Ascending aorta (tissue), 2 donors: ENCODE measurements at regions of chr2 and their contacts with region 1.

Region 1: DNA sequence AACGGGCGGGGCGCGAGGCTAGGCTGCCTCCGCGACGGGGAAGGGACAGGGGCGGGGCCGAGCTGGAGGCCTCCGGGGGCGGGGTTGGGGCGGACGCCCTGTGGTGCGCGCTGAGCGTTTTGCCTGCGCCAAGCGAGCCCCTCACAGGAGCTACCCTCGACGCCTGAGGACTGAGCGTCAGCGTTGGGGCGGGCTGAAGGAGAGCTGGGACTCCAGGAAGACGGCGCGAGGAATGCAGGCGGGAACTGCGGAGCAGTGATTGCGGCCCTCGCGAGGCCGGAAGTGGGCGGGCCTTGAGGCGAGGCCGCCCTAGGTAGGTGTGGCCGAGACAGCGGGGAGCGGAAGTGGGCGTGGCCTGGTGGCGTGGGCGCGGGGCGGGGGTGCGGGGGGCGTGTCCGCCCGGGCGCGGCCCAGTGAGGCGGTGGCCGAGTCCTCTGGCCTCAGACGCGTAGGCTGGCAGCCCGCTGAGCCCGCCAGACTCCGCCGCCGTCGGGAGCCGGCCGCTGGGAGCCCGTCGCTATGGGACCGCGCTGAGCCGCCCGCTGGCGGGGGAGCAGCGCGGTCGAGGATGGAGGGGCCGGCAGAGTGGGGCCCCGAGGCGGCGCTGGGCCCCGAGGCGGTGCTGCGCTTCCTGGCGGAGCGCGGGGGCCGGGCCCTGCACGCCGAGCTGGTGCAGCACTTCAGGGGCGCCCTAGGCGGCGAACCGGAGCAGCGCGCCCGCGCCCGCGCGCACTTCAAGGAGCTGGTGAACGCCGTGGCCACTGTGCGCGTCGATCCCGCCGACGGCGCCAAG is at the starts of genes SEPTIN10 and SOWAHC:
- DNase-seq: peak; percentile 92 to 99
- H3K4me3 ChIP-seq: peak within 1 kb of the TSS; percentile 72 to 93
- H3K27ac ChIP-seq: peak within 1 kb of the TSS; percentile 93 to 99
- H3K4me1 ChIP-seq: peaks cover 9 to 25% of the 10 kb centered on the region in 2 donors
- H3K27me3 ChIP-seq: no peaks in the 10 kb centered on the region
- CTCF ChIP-seq: no peak
- total RNA-seq, gene SEPTIN10: 59.0 TPM
- total RNA-seq, gene SOWAHC: 20.8 TPM

Region 2: GRCh38 chr2:109164739-109165221 is 449.3 kb before region 1 on chr2:
- intact Hi-C with region 1: loop called (anchors 10 kb)
- DNase-seq: peak in 1 of 2 donors; percentile 81
- H3K4me3 ChIP-seq: no peak overlapping the region
- H3K27ac ChIP-seq: peak overlapping the region; percentile 58 to 66
- H3K4me1 ChIP-seq: peaks cover 17 to 46% of the 10 kb centered on the region in 2 donors
- H3K27me3 ChIP-seq: no peaks in the 10 kb centered on the region
- CTCF ChIP-seq: no peak

Region 3: DNA sequence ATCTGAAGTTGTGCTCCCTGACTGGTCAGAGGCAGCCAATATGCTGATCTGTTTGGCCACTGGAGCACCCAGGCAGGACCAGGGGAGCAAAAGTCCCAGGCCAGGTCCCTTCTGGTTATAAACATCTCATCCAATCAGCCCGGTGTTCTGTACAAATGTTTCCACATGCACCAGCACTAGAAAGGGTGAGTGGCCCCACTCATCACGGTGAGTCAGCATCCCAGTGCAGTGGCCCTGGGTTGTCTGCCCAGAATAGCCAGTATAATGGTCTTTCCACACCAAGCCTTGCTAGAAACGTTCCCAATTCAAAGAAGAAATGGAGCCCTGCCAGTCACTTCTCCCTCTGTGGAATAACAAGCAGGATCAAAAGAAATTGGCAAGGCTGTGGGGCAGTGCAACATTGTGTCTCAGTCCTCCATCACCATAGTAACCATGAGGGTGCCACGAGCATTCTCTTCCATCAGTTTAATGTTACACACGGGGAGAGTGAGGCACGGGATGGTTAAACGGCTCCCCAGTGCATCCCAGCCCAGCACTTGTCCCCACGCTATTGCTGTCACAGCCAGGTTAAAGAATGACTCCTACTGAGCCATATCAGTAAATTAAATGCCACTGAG is 175.2 kb before region 1 on chr2:
- intact Hi-C with region 1: no loop called
- DNase-seq: peak; percentile 75 to 93
- H3K4me3 ChIP-seq: no peak overlapping the region
- H3K27ac ChIP-seq: peak overlapping the region; percentile 89 to 96
- H3K4me1 ChIP-seq: peaks cover 36 to 49% of the 10 kb centered on the region in 2 donors
- H3K27me3 ChIP-seq: no peaks in the 10 kb centered on the region
- CTCF ChIP-seq: peak in 1 of 3 experiments; percentile 25

Region 4: DNA sequence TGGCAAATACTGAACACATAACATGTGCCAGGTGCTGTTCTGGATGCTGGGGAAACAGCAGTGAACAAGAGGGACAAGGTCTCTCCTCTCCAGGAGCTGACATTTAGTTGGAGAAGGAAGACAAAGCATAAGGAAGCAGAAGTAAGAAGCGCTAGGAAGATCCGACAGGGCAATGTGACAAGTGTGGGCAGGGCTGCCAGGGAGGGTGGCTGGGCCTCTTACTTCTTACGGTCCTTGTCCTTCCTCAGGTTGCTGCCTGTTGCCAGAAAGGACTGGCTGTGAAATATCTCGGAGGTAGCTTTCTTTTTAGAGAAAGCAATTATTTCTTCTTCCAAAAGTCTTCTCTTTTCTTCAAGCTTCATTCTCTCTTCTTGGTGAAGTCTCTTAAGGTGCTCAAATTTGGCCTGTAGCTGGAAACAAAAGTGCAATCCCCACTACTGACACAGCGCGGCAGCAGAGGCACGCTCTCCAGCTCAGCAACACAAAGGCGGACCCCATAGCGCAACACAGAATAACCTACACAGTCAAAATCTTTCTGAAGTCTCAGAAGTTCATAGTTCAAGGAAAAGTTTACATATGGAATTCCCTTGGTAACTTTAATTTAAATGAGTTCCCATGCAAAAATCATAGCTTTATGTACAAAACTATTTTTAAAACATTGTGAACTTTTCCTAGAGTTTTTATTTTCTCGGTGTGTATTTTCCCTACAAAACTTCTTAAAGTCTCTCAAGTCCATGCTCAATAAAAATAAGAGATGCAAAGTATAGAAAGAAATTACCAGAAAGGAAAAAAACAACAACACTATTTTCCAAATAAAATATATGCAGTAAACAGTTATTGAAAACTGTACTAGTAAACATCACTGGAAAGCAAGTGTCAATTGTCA is 68.0 kb before region 1 on chr2:
- intact Hi-C with region 1: loop called (anchors 2 kb)
- DNase-seq: peak in 1 of 2 donors; percentile 76
- H3K4me3 ChIP-seq: no peak overlapping the region
- H3K27ac ChIP-seq: no peak overlapping the region
- H3K4me1 ChIP-seq: peaks cover 0 to 3% of the 10 kb centered on the region in 2 donors
- H3K27me3 ChIP-seq: no peaks in the 10 kb centered on the region
- CTCF ChIP-seq: peak; percentile 91 to 96 (median 92)

Region 5: DNA sequence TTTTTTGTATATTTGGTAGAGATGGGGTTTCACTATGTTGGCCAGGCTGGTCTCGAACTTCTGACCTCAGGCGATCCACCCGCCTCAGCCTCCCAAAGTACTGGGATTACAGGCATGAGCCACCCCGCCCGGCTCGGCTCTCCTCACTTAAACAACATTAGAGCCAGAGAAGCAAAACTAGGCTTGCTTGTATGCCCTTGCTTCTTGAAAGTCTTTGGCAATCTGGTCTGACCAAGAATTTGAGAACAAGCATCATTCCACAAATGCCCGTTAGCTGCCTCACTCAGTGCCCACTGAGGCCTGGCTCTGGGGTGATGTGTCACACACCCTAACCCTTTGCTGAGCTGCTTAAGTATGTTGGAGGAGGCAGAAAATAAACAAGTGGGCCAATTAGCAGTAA is 33.5 kb after region 1 on chr2:
- intact Hi-C with region 1: loop called (anchors 1 kb)
- DNase-seq: peak; percentile 16 to 90
- H3K4me3 ChIP-seq: peak overlapping the region in 1 of 2 donors; percentile 49
- H3K27ac ChIP-seq: peak overlapping the region; percentile 73 to 87
- H3K4me1 ChIP-seq: peaks cover 4 to 23% of the 10 kb centered on the region in 2 donors
- H3K27me3 ChIP-seq: no peaks in the 10 kb centered on the region
- CTCF ChIP-seq: no peak

Region 6: DNA sequence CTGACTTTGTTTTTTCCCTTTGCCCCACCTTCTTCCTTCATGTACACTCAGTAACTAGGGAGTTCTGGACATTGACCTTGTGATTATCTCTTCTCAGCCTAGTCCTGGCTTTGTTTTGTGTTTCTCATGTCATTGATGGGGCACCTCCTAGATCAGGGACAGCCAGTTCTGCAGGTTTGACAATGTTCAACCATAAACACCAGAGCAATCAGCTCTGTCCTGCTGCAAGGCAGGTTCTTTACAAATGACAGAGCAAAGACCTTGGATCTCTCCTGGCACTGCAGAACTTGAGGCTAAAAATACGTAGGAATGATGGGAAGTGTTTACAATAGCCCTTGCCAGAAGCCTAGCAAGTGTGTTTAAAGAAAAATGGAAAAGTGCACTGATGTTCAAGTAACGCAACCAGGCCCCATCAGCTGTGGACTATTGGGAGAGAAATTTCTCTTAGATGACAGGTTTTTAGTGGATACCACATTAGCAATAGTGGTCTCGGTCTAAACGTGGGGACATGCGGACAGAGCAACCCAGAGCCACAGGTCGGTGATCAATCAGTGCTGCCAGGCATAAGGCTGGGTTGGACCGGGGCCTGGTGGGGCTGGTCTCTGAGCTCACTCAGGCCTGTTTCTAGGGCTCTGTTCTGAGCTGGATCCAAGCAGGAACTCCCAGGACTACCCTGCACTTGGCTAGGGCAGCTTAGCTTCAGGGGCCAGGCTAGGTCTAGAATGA is 76.9 kb after region 1 on chr2:
- intact Hi-C with region 1: loop called (anchors 2 kb)
- DNase-seq: peak; percentile 14 to 81
- H3K4me3 ChIP-seq: peak overlapping the region in 1 of 2 donors; percentile 24
- H3K27ac ChIP-seq: peak overlapping the region; percentile 78 to 79
- H3K4me1 ChIP-seq: peaks cover 19 to 28% of the 10 kb centered on the region in 2 donors
- H3K27me3 ChIP-seq: no peaks in the 10 kb centered on the region
- CTCF ChIP-seq: no peak

Region 7: DNA sequence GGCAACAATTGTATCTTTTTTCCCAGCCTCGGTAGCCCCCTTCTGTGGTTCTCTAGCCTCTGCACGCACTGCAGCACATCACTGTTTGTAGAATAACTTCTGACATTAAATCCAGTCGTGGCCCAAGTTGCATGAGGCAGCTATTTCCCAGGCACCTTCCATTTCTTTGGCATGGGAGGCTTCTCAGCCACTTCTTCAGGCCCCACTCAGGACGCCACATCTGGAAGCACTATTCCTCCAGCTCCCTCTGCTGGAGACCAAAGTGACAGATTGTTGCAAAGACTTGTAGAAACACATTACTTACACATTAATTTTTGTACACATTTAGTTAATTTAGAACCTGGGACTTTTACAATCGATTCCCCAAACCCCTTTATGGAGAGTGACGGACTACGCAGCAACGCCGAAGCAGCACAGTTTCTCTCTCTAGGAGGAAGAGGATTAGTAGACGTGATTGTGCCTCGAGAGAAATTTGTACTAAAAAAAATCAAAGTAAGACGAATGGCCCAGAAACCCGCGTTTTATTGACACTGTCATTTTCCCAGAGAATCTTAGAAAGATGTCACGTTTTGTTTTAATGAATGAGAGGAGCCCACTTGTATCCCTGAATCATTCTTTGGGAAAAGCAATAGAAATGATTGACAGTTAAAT is 122.2 kb after region 1 on chr2:
- intact Hi-C with region 1: loop called (anchors 5 kb)
- DNase-seq: peak in 1 of 2 donors; percentile 83
- H3K4me3 ChIP-seq: no peak overlapping the region
- H3K27ac ChIP-seq: no peak overlapping the region
- H3K4me1 ChIP-seq: no peaks in the 10 kb centered on the region
- H3K27me3 ChIP-seq: no peaks in the 10 kb centered on the region
- CTCF ChIP-seq: peak; percentile 62 to 84 (median 71)